ENCODE measurements at regions of chr20 and their contacts with region 1.

Region 1: GRCh38 chr20:50987592-50988210 is 29.1 kb downstream of the MOCS3 start:
- DNase-seq: peak; percentile 73
- H3K4me3 ChIP-seq: no peak overlapping the region
- H3K27ac ChIP-seq: no peak overlapping the region
- H3K4me1 ChIP-seq: no peaks in the 10 kb centered on the region
- H3K27me3 ChIP-seq: 0 out of 2 replicates have a peak, but pooled peaks cover 7% of the 10 kb centered on the region
- CTCF ChIP-seq: peak; percentile 98

Region 2: GRCh38 chr20:50772420-50773185 is 215.1 kb before region 1 on chr20:
- CTCF ChIA-PET with region 1: no interaction called
- POLR2A ChIA-PET with region 1: no interaction called
- intact Hi-C with region 1: no loop called
- DNase-seq: no peak
- H3K4me3 ChIP-seq: no peak overlapping the region
- H3K27ac ChIP-seq: no peak overlapping the region
- H3K4me1 ChIP-seq: no peaks in the 10 kb centered on the region
- H3K27me3 ChIP-seq: no peaks in the 10 kb centered on the region
- CTCF ChIP-seq: no peak

Region 3: GRCh38 chr20:50856036-50856756 is 131.5 kb before region 1 on chr20:
- CTCF ChIA-PET with region 1: no interaction called
- POLR2A ChIA-PET with region 1: no interaction called
- intact Hi-C with region 1: no loop called
- DNase-seq: peak in 1 of 2 experiments; percentile 59
- H3K4me3 ChIP-seq: no peak overlapping the region
- H3K27ac ChIP-seq: no peak overlapping the region
- H3K4me1 ChIP-seq: no peaks in the 10 kb centered on the region
- H3K27me3 ChIP-seq: no peaks in the 10 kb centered on the region
- CTCF ChIP-seq: no peak

Region 4: DNA sequence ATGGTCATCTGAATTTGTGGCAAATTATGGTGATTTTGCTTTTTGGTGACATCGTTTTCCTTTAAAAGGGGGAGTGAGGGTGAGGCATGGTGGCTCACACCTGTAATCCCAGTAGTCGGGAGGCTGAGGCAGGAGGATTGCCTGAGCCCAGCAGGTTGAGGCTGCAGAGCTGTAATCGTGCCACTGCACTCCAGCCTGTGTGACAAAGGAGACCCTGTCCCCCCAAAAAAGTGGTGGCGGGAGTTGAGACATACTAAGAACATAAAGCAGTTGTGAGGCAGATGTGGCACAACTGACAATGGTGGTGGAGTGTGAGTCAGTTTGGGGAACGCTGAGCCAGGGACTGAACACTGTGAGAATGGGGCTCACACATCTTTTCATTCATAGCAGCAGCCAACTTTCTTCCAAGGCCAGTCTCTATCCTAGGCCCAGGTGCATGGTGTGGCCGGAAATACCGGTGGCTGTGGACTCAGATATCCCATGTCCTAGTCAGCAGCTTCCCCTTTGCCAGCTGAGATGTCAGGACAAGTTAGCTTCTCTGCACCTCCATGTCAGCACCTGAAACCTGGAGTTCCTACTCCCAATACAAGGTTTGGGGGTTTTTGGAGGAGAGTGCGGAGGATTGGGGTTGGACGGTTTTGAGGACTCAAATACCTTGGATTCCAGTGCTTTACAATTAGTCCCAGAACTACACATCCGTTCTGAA is 101.8 kb before region 1 on chr20:
- CTCF ChIA-PET with region 1: no interaction called
- POLR2A ChIA-PET with region 1: no interaction called
- intact Hi-C with region 1: no loop called
- DNase-seq: no peak
- H3K4me3 ChIP-seq: no peak overlapping the region
- H3K27ac ChIP-seq: no peak overlapping the region
- H3K4me1 ChIP-seq: no peaks in the 10 kb centered on the region
- H3K27me3 ChIP-seq: no peaks in the 10 kb centered on the region
- CTCF ChIP-seq: no peak

Region 5: GRCh38 chr20:51423290-51423667 is 435.6 kb after region 1 on chr20:
- CTCF ChIA-PET with region 1: interaction called, 13 read pairs
- POLR2A ChIA-PET with region 1: no interaction called
- intact Hi-C with region 1: no loop called
- DNase-seq: peak in 1 of 2 experiments; percentile 38
- H3K4me3 ChIP-seq: 0 out of 2 replicates have a peak overlapping the region, but pooled peaks have one; percentile 16
- H3K27ac ChIP-seq: peak overlapping the region; percentile 77
- H3K4me1 ChIP-seq: peaks cover 32% of the 10 kb centered on the region
- H3K27me3 ChIP-seq: no peaks in the 10 kb centered on the region
- CTCF ChIP-seq: no peak

Region 6: GRCh38 chr20:51447097-51447771 is 459.5 kb after region 1 on chr20:
- CTCF ChIA-PET with region 1: no interaction called
- POLR2A ChIA-PET with region 1: no interaction called
- intact Hi-C with region 1: no loop called
- DNase-seq: peak; percentile 78 to 93
- H3K4me3 ChIP-seq: peak overlapping the region; percentile 16; the same call in 1 of the 2 replicates
- H3K27ac ChIP-seq: peak overlapping the region; percentile 76
- H3K4me1 ChIP-seq: peaks cover 28% of the 10 kb centered on the region
- H3K27me3 ChIP-seq: no peaks in the 10 kb centered on the region
- CTCF ChIP-seq: 0 out of 2 replicates have a peak, but pooled peaks have one; percentile 16

Region 7: GRCh38 chr20:51595058-51595532 is 607.4 kb after region 1 on chr20:
- CTCF ChIA-PET with region 1: interaction called, 10 read pairs
- POLR2A ChIA-PET with region 1: no interaction called
- intact Hi-C with region 1: loop called (anchors 1 kb)
- DNase-seq: peak; percentile 71 to 79
- H3K4me3 ChIP-seq: no peak overlapping the region
- H3K27ac ChIP-seq: no peak overlapping the region
- H3K4me1 ChIP-seq: peaks cover 10% of the 10 kb centered on the region
- H3K27me3 ChIP-seq: no peaks in the 10 kb centered on the region
- CTCF ChIP-seq: peak; percentile 93

Region 8: GRCh38 chr20:52083627-52084232 is 1096.0 kb after region 1 on chr20:
- CTCF ChIA-PET with region 1: no interaction called
- POLR2A ChIA-PET with region 1: no interaction called
- intact Hi-C with region 1: loop called (anchors 1 kb)
- DNase-seq: peak; percentile 34 to 48
- H3K4me3 ChIP-seq: no peak overlapping the region
- H3K27ac ChIP-seq: peak overlapping the region; percentile 33; the same call in 1 of the 2 replicates
- H3K4me1 ChIP-seq: peaks cover 13% of the 10 kb centered on the region
- H3K27me3 ChIP-seq: no peaks in the 10 kb centered on the region
- CTCF ChIP-seq: peak; percentile 82